ENCODE measurements at regions of chr4 and their contacts with region 1.

Region 1: DNA sequence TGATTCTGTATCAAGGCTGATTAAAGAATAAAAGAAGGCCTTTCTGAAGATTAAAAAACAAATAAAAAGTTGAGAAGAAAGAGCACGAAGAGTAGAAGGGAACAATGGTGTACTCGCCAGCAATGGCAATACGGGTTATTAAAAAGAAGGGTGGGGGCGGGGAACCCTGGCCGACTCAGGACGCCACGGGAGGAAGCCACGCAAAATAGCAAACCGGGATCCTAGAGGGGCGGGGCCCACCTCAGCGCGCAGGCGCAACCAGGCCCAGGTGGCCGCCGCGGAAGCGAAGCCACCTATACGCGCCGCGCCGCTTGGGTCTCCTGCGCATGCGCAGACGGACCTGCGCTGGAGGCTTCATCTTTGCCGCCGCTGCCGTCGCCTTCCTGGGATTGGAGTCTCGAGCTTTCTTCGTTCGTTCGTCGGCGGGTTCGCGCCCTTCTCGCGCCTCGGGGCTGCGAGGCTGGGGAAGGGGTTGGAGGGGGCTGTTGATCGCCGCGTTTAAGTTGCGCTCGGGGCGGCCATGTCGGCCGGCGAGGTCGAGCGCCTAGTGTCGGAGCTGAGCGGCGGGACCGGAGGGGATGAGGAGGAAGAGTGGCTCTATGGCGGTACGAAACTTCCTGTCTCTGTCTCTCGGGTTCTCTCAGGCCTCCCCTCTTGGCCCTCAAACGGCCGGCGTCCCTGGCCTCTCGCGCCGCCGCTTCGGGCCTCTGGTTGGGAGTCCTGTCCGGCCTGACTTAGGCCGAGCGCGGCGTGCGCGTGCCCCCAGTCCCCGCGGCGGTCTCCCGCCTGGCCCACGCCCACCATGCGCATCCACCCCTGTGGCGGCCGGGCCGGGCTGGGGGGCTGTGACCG is at the start of gene FIP1L1:
- DNase-seq: peak; percentile 71
- H3K4me3 ChIP-seq: peak within 1 kb of the TSS; percentile 80
- H3K27ac ChIP-seq: peak within 1 kb of the TSS; percentile 66
- H3K27me3 ChIP-seq: no peaks in the 10 kb centered on the region
- CTCF ChIP-seq: no peak
- polyA plus RNA-seq, gene FIP1L1: 28.3 and 30.5 TPM in 2 replicates

Region 2: DNA sequence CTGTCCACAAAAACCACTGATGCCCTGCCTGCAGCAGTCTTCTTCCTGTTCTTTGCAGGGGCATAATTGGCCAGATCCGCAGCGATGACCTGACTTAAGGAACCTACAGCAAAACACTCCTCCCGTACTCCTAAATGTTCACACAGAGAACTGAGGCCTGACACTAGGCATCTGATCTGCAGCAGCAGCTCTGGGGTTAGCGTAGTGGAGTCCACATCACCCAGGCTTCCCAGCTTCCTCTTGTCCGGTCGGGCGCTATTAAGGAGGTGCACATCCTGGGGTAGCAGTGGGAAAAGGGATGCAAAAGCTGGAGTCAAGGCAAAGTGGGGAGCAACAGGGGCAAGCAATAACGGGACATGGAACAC is 12.4 kb before region 1 on chr4:
- CTCF ChIA-PET with region 1: no interaction called
- POLR2A ChIA-PET with region 1: no interaction called
- DNase-seq: no peak
- H3K4me3 ChIP-seq: peak overlapping the region; percentile 77
- H3K27ac ChIP-seq: no peak overlapping the region
- H3K27me3 ChIP-seq: no peaks in the 10 kb centered on the region
- CTCF ChIP-seq: no peak

Region 3: DNA sequence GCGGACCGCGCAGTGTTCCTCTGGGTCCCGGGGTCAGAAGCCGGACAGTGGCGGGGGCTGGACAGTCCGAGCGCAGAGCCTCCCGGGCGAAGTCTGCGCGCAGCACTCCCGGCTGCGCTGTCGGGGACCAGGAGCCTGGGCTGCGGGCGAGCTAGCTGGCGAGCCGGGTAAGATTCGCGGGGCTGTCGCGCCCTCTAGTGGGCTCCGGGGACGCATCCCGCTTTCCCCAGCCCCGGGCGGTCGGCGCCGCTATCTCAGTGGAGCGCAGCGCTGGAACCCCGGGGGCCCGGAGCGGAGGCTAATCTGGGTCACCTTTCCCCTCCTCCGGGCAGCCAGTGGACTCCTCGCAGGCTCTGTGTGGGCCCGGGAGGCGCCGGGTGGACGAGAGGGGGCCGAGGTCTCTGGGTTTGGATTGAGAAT is 855.7 kb after region 1 on chr4:
- CTCF ChIA-PET with region 1: interaction called, 12 read pairs
- POLR2A ChIA-PET with region 1: interaction called, 5 read pairs
- DNase-seq: peak; percentile 61
- H3K4me3 ChIP-seq: peak overlapping the region; percentile 97
- H3K27ac ChIP-seq: peak overlapping the region; percentile 73
- H3K27me3 ChIP-seq: no peaks in the 10 kb centered on the region
- CTCF ChIP-seq: peak; percentile 72

Measured in AG04450 (cell line).